ENCODE measurements at regions of chr11 and their contacts with region 1.

Region 1: DNA sequence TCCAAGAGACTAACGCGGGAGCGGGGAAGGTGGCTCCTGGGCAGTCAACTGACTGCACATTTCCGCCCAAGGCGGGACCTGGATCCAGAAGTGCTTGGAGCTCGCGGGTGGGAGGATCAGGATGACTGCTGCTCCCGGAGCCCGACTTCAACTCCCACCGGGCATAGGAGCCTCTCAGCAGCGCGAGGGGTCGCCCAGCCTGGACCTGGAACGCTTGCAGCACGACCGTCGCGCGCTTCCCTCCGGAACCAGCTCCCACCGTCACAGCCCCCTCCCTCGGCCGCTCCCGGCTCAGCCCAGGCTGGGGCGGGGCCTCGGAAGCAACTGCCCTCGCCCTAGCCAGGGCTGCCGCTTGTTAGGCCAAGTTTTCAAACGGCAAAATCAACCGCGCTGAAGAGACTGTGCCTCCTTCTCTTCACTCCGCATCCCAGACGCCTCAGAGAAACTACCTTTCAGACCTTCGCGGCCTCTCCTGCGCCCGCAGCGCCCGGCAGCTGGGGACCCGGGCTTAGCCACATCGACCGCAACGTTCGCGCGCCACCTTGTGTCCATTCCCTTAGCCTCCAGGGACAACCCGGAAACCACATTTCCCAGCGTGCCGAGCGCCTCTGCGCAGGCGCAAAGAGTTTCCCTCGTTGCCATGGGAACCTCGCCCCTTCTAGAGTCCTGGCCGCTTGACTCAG is 14.0 kb downstream of the SSH3 start:
- DNase-seq: peak; percentile 98
- H3K4me3 ChIP-seq: peak overlapping the region; percentile 51 to 96 (median 88)
- H3K27ac ChIP-seq: peak overlapping the region; percentile 97 to 99 (median 97)
- H3K4me1 ChIP-seq: peaks cover 14 to 39% (median 31%) of the 10 kb centered on the region in 4 donors
- H3K27me3 ChIP-seq: no peaks in the 10 kb centered on the region
- CTCF ChIP-seq: peak; percentile 90 to 100 (median 93)
- EP300 ChIP-seq: no peak
- POLR2A ChIP-seq: peak; percentile 89

Region 2: GRCh38 chr11:67265633-67266423 is 51.5 kb before region 1 on chr11:
- in situ Hi-C with region 1: loop called in 2 of 4 experiments (anchors 5 kb)
- intact Hi-C with region 1: loop called (anchors 2 kb)
- DNase-seq: peak; percentile 85
- H3K4me3 ChIP-seq: no peak overlapping the region
- H3K27ac ChIP-seq: peak overlapping the region; percentile 68 to 78 (median 74)
- H3K4me1 ChIP-seq: peaks cover 45 to 70% (median 63%) of the 10 kb centered on the region in 4 donors
- H3K27me3 ChIP-seq: no peaks in the 10 kb centered on the region
- CTCF ChIP-seq: peak; percentile 67 to 86 (median 72)
- EP300 ChIP-seq: no peak
- POLR2A ChIP-seq: no peak

Region 3: GRCh38 chr11:67606492-67607201 is 289.3 kb after region 1 on chr11 and contains the start of gene NDUFV1:
- in situ Hi-C with region 1: no loop called
- intact Hi-C with region 1: no loop called
- DNase-seq: peak; percentile 98
- H3K4me3 ChIP-seq: peak within 1 kb of the TSS; percentile 81 to 99 (median 94)
- H3K27ac ChIP-seq: peak within 1 kb of the TSS; percentile 85 to 93 (median 90)
- H3K4me1 ChIP-seq: peaks cover 7 to 20% (median 17%) of the 10 kb centered on the region in 4 donors
- H3K27me3 ChIP-seq: no peaks in the 10 kb centered on the region
- CTCF ChIP-seq: peak; percentile 56 to 93 (median 81)
- EP300 ChIP-seq: no peak
- POLR2A ChIP-seq: peak; percentile 90
- total RNA-seq, gene NDUFV1: 421 to 762 (median 554) TPM

Measured in transverse colon (tissue), 4 donors.